ENCODE measurements at regions of chr5 and their contacts with region 1.

Region 1: DNA sequence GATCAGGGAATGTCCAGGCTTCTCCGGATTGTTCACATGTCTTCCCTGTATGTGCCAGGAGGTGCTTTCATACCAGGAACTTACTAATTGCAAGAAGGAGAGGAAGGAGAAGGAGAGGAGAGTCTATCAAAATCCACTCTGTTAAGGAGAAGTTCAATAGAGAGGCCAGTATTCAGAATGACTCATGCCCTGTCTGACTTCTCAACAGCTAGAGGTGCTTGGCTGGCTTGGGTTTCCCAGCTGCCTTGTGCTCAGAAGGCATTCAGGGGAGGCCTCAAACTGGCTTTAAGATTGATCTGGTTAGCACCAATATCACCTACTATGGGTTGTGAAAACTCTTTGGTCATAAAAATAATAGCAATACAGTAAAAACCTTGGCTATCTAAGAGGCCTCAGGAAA is 167.9 kb upstream of the GLRA1 start:
- DNase-seq: peak; percentile 35
- H3K4me3 Mint-ChIP-seq: no peak overlapping the region
- H3K27ac Mint-ChIP-seq: no peak overlapping the region
- H3K4me1 Mint-ChIP-seq: no peaks in the 10 kb centered on the region
- H3K27me3 Mint-ChIP-seq: peaks cover 57% of the 10 kb centered on the region
- CTCF ChIP-seq: no peak

Region 2: GRCh38 chr5:152058267-152058666 is 34.3 kb before region 1 on chr5:
- CTCF ChIA-PET with region 1: no interaction called
- POLR2A ChIA-PET with region 1: no interaction called
- intact Hi-C with region 1: loop called (anchors 5 kb)
- DNase-seq: no peak
- H3K4me3 Mint-ChIP-seq: no peak overlapping the region
- H3K27ac Mint-ChIP-seq: no peak overlapping the region
- H3K4me1 Mint-ChIP-seq: no peaks in the 10 kb centered on the region
- H3K27me3 Mint-ChIP-seq: peaks cover 27% of the 10 kb centered on the region
- CTCF ChIP-seq: no peak

Region 3: GRCh38 chr5:152178350-152178699 is 85.7 kb after region 1 on chr5:
- CTCF ChIA-PET with region 1: no interaction called
- POLR2A ChIA-PET with region 1: no interaction called
- intact Hi-C with region 1: no loop called
- DNase-seq: no peak
- H3K4me3 Mint-ChIP-seq: no peak overlapping the region
- H3K27ac Mint-ChIP-seq: no peak overlapping the region
- H3K4me1 Mint-ChIP-seq: no peaks in the 10 kb centered on the region
- H3K27me3 Mint-ChIP-seq: peaks cover 18% of the 10 kb centered on the region
- CTCF ChIP-seq: no peak